Panc1 (cell line): ENCODE measurements at regions of chr2 and their contacts with region 1.

Region 1: DNA sequence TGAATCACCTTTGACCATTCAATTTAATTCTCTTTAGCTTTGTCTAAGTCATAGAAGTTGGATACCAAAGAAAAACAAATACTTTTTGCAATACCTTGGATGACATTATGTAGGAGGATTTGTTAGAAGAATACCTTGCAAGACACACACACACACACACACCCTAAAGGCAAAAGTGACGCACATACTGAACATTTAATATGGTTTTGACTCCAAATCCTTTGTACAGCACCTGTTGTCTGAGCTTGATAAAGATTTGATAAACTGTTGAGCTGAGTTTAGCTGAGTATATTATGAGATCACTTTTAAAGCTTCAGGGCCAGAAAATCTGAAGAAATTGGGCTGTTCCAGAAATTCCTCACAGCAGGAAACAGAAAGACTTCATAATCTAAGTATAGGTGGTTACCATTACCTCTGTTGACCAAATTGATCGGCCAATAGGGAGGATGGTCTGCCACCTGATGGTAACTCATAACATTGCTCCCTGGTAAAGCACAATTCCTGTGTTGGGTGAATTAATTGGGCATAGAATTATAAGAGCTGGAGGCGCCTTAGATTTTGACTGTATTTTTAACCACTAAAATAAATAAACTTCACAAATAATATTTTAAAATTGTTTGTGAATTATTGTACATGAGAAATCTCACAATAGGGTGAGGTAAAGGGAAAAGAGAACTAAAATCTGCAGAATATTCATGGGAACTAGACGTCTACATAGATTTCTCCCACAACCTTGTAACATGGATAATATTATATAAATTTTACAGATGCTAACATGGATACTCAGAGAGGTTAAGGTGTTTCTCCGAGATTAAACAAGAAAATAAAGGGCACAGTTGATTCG is 21.9 kb upstream of the RPIA start:
- DNase-seq: no peak
- ATAC-seq: 0 out of 2 replicates have a peak, but pooled peaks have one; percentile 69
- H3K4me3 ChIP-seq: no peak overlapping the region
- H3K27ac ChIP-seq: no peak overlapping the region
- H3K4me1 ChIP-seq: no peaks in the 10 kb centered on the region
- H3K27me3 ChIP-seq: 0 out of 2 replicates have a peak, but pooled peaks cover 2% of the 10 kb centered on the region
- CTCF ChIP-seq: peak; percentile 74

Region 2: GRCh38 chr2:88489200-88489599 is 180.4 kb before region 1 on chr2:
- CTCF ChIA-PET with region 1: interaction called, 11 read pairs
- POLR2A ChIA-PET with region 1: no interaction called
- in situ Hi-C with region 1: no loop called
- intact Hi-C with region 1: no loop called
- DNase-seq: no peak
- ATAC-seq: no peak
- H3K4me3 ChIP-seq: no peak overlapping the region
- H3K27ac ChIP-seq: no peak overlapping the region
- H3K4me1 ChIP-seq: no peaks in the 10 kb centered on the region
- H3K27me3 ChIP-seq: peaks cover 2% of the 10 kb centered on the region; the same call in 1 of the 2 replicates
- CTCF ChIP-seq: no peak

Region 3: GRCh38 chr2:88590998-88591613 is 78.5 kb before region 1 on chr2:
- CTCF ChIA-PET with region 1: interaction called, 4 read pairs
- POLR2A ChIA-PET with region 1: no interaction called
- in situ Hi-C with region 1: no loop called
- intact Hi-C with region 1: loop called (anchors 2 kb)
- DNase-seq: peak; percentile 58
- ATAC-seq: peak; percentile 94
- H3K4me3 ChIP-seq: no peak overlapping the region
- H3K27ac ChIP-seq: no peak overlapping the region
- H3K4me1 ChIP-seq: no peaks in the 10 kb centered on the region
- H3K27me3 ChIP-seq: no peaks in the 10 kb centered on the region
- CTCF ChIP-seq: peak; percentile 80; the same call in 1 of the 2 replicates

Region 4: GRCh38 chr2:88627856-88628568 is 41.6 kb before region 1 on chr2:
- CTCF ChIA-PET with region 1: interaction called, 4 read pairs
- POLR2A ChIA-PET with region 1: interaction called, 12 read pairs
- in situ Hi-C with region 1: no loop called
- intact Hi-C with region 1: no loop called
- DNase-seq: no peak
- ATAC-seq: peak; percentile 83
- H3K4me3 ChIP-seq: peak overlapping the region; percentile 86 to 94
- H3K27ac ChIP-seq: peak overlapping the region; percentile 97
- H3K4me1 ChIP-seq: peaks cover 21% of the 10 kb centered on the region
- H3K27me3 ChIP-seq: no peaks in the 10 kb centered on the region
- CTCF ChIP-seq: no peak

Region 5: GRCh38 chr2:88967844-88968243 is 298.3 kb after region 1 on chr2:
- CTCF ChIA-PET with region 1: no interaction called
- POLR2A ChIA-PET with region 1: no interaction called
- in situ Hi-C with region 1: no loop called
- intact Hi-C with region 1: no loop called
- DNase-seq: no peak
- ATAC-seq: peak; percentile 72; the same call in 1 of the 2 replicates
- H3K4me3 ChIP-seq: no peak overlapping the region
- H3K27ac ChIP-seq: no peak overlapping the region
- H3K4me1 ChIP-seq: no peaks in the 10 kb centered on the region
- H3K27me3 ChIP-seq: no peaks in the 10 kb centered on the region
- CTCF ChIP-seq: peak; percentile 69